Activated T-helper 2 cell treated with anti-CD3 and anti-CD28 coated beads, Interferon-gamma antibody, Interleukin-2, Interleukin-4, amounts not matched to agents 10 μg/mL and 5 μg/mL and 100 μg/mL, durations not matched to agents 14 hours and 24 hours and 36 hours (primary cell): ENCODE measurements at regions of chr7 and their contacts with region 1.

Region 1: DNA sequence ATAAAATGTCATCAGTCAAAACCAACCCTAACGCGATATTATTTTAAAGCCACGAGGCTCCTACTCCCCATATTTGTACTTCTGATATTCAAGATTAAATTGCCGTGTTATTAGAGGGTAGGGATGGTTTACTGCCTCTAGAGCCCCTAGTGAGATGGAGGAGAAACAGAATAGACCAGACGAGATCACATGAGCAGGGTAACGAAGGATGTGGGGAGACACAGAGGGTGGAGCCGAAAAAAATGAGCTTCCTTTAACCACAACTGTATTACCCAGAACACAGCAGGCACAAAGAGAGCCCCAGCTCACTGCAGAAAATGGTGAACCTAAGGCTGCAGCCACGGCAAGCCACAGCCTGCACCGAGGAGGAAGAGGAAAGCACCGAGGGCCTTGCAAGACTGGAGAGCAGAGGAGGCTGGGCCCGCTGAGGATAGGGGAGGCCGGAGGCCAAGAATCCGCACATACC is 14.3 kb downstream of the ZC3HAV1 start:
- DNase-seq: peak; percentile 87
- H3K4me3 Mint-ChIP-seq: peak overlapping the region; percentile 83
- H3K27ac Mint-ChIP-seq: peak overlapping the region; percentile 88
- H3K4me1 Mint-ChIP-seq: peaks cover 76% of the 10 kb centered on the region
- H3K27me3 Mint-ChIP-seq: no peaks in the 10 kb centered on the region

Region 2: DNA sequence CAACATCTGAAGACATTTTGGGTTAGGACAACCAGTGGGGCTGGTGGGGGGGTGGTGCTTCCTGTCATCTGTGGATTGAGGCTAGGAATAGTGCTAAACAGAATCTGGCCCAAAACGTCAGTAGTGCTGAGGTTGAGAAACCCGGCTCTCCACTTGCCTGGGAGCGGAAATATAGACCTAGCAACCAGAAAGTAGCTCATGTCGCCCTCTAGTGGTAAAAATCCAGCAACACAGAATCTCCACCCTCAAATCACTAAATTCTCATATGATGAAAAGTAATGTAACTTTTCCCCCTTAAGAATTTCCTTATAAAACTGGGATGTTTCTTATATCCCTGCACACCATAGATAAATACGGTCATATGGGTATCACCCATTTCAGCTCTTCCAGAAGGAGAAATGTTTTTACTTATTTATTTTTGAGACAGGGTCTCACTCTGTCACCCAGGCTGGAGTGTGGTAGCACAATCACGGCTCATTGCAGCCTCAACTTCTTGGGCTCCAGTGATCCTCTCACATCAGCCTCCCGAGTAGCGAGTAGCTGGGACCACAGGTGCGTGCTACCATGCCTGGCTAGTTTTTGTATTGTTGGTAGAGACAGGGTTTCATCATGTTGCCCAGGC is 20.1 kb before region 1 on chr7:
- intact Hi-C with region 1: loop called (anchors 2 kb)
- DNase-seq: peak; percentile 57
- H3K4me3 Mint-ChIP-seq: peak overlapping the region; percentile 13
- H3K27ac Mint-ChIP-seq: peak overlapping the region; percentile 78
- H3K4me1 Mint-ChIP-seq: peaks cover 52% of the 10 kb centered on the region
- H3K27me3 Mint-ChIP-seq: no peaks in the 10 kb centered on the region

Region 3: GRCh38 chr7:139084709-139085108 is 10.5 kb before region 1 on chr7:
- intact Hi-C with region 1: loop called (anchors 1 kb)
- DNase-seq: no peak
- H3K4me3 Mint-ChIP-seq: no peak overlapping the region
- H3K27ac Mint-ChIP-seq: peak overlapping the region; percentile 83
- H3K4me1 Mint-ChIP-seq: peaks cover 73% of the 10 kb centered on the region
- H3K27me3 Mint-ChIP-seq: no peaks in the 10 kb centered on the region

Region 4: GRCh38 chr7:139109188-139109982 is 14.2 kb after region 1 on chr7 and contains the start of gene ZC3HAV1:
- intact Hi-C with region 1: loop called (anchors 1 kb)
- DNase-seq: peak; percentile 90
- H3K4me3 Mint-ChIP-seq: peak within 1 kb of the TSS; percentile 100
- H3K27ac Mint-ChIP-seq: peak within 1 kb of the TSS; percentile 98
- H3K4me1 Mint-ChIP-seq: peaks cover 30% of the 10 kb centered on the region
- H3K27me3 Mint-ChIP-seq: no peaks in the 10 kb centered on the region
- total RNA-seq, gene ZC3HAV1: 76.0 and 77.1 TPM in 2 replicates

Region 5: DNA sequence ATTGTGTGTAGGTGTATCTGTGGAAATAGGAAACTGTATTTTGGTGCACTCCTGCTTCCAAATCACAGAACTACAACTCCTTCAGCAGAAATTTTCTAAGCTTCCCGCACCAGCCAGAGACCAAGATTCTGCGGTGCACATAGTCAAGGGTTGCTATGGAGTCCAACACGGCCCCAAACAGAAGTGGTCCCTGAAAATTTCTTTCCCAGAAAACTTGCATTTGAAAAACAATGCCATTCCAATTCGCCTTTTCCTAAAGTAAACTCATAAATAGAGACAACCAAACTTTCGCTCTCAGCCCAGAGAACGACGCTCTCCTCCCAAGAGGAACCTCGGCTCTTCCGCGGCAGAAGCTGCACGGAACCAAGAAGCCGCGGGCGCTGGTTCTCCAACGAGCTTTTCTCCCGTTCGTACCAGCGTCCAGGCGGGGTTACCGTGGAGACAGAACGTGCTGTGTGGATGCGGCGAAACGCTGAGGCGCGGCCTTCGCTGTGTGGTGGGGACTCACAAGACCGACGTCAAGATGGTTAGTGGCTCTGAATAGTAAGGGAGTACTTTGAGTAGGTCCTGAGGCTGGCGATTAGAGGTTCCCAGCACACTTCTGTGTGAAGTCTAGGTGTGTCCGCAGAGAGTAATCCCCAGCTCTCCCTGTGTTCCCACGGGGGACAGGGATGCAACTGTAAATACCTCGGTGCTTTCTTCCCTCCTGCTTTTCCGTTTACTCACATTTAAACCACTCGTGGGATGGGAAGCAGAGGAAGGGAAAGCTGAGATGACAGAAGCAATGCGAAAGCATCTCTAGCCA is 38.3 kb after region 1 on chr7:
- intact Hi-C with region 1: no loop called
- DNase-seq: peak; percentile 82
- H3K4me3 Mint-ChIP-seq: peak overlapping the region; percentile 85
- H3K27ac Mint-ChIP-seq: peak overlapping the region; percentile 65
- H3K4me1 Mint-ChIP-seq: peaks cover 26% of the 10 kb centered on the region
- H3K27me3 Mint-ChIP-seq: peaks cover 4% of the 10 kb centered on the region

Region 6: DNA sequence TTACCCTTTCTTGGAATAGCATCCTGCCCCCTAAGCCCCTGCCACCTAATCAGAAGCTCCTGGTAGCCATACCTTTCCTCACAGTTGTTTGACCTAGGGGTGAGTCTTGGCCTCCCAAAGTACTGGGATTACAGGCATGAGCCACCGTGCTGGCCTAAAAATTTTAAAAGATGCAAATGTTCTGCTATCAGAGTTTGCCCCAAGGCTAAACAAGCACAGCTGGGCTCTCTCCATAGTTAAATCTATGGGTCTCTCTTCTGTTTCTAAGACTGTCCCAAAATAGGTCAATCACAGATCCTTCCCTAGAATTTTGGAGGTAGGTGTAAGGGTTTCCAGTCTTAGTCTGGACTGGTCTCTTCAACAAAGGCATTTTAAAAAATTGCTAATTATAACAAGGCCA is 122.9 kb after region 1 on chr7:
- intact Hi-C with region 1: no loop called
- DNase-seq: no peak
- H3K4me3 Mint-ChIP-seq: no peak overlapping the region
- H3K27ac Mint-ChIP-seq: no peak overlapping the region
- H3K4me1 Mint-ChIP-seq: no peaks in the 10 kb centered on the region
- H3K27me3 Mint-ChIP-seq: peaks cover 15% of the 10 kb centered on the region

Region 7: GRCh38 chr7:139340037-139340807 is 245.0 kb after region 1 on chr7:
- intact Hi-C with region 1: loop called (anchors 2 kb)
- DNase-seq: peak; percentile 97
- H3K4me3 Mint-ChIP-seq: peak overlapping the region; percentile 97
- H3K27ac Mint-ChIP-seq: peak overlapping the region; percentile 100
- H3K4me1 Mint-ChIP-seq: peaks cover 21% of the 10 kb centered on the region
- H3K27me3 Mint-ChIP-seq: peaks cover 3% of the 10 kb centered on the region

Region 8: GRCh38 chr7:139359366-139360209 is 264.4 kb after region 1 on chr7 and contains the start of gene LUC7L2:
- intact Hi-C with region 1: loop called (anchors 5 kb)
- DNase-seq: peak; percentile 99
- H3K4me3 Mint-ChIP-seq: peak within 1 kb of the TSS; percentile 94
- H3K27ac Mint-ChIP-seq: peak within 1 kb of the TSS; percentile 99
- H3K4me1 Mint-ChIP-seq: peaks cover 32% of the 10 kb centered on the region
- H3K27me3 Mint-ChIP-seq: no peaks in the 10 kb centered on the region
- total RNA-seq, gene LUC7L2: 150 and 151 TPM in 2 replicates